ENCODE measurements at regions of chr3 and their contacts with region 1.

Region 1: GRCh38 chr3:119819806-119820205 is 37.9 kb downstream of the NR1I2 start:
- DNase-seq: no peak
- ATAC-seq: no peak
- H3K4me3 ChIP-seq: no peak overlapping the region
- H3K27ac ChIP-seq: no peak overlapping the region
- H3K4me1 ChIP-seq: peaks cover 12% of the 10 kb centered on the region
- H3K27me3 ChIP-seq: no peaks in the 10 kb centered on the region
- CTCF ChIP-seq: no peak
- EP300 ChIP-seq: no peak
- POLR2A ChIP-seq: no peak
- RAD21 ChIP-seq: no peak

Region 2: DNA sequence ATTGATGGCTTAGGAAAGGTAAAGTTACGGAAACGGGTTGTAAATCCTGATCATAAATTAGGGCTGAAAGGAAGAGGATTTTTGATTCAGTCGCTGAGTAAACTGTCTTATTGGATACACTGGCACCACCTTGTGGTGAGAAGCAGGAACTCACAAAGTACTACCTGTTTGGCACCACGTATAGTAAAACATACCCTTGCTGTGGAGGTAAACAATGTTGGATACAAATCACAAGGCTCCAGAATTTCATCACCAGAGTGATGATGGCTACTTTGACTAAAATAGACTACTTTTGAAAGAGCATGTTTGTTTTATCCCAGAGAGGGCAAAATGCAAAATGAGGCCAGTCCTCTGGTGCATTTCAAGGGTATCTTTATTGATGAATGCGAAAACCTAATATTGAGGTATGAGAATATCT is 1002.0 kb before region 1 on chr3:
- CTCF ChIA-PET with region 1: no interaction called
- POLR2A ChIA-PET with region 1: no interaction called
- in situ Hi-C with region 1: no loop called
- intact Hi-C with region 1: no loop called
- DNase-seq: peak; percentile 48
- ATAC-seq: peak; percentile 89
- H3K4me3 ChIP-seq: no peak overlapping the region
- H3K27ac ChIP-seq: no peak overlapping the region
- H3K4me1 ChIP-seq: no peaks in the 10 kb centered on the region
- H3K27me3 ChIP-seq: no peaks in the 10 kb centered on the region
- CTCF ChIP-seq: peak; percentile 78
- EP300 ChIP-seq: no peak
- POLR2A ChIP-seq: no peak
- RAD21 ChIP-seq: peak; percentile 16; the same call in 1 of the 2 replicates

Region 3: GRCh38 chr3:119716998-119717397 is 102.8 kb before region 1 on chr3:
- CTCF ChIA-PET with region 1: no interaction called
- POLR2A ChIA-PET with region 1: no interaction called
- in situ Hi-C with region 1: no loop called
- intact Hi-C with region 1: loop called (anchors 5 kb)
- DNase-seq: peak; percentile 80
- ATAC-seq: peak; percentile 98
- H3K4me3 ChIP-seq: no peak overlapping the region
- H3K27ac ChIP-seq: no peak overlapping the region
- H3K4me1 ChIP-seq: peaks cover 23% of the 10 kb centered on the region
- H3K27me3 ChIP-seq: no peaks in the 10 kb centered on the region; a peak in 1 of 5 replicates
- CTCF ChIP-seq: peak; percentile 21; the same call in 1 of the 2 replicates
- EP300 ChIP-seq: 0 out of 4 replicates have a peak, but pooled peaks of 1 of the 2 experiments have one; percentile 42
- POLR2A ChIP-seq: no peak
- RAD21 ChIP-seq: no peak

Region 4: GRCh38 chr3:119779731-119780383 is 39.9 kb before region 1 on chr3:
- CTCF ChIA-PET with region 1: interaction called, 5 read pairs
- POLR2A ChIA-PET with region 1: no interaction called
- in situ Hi-C with region 1: no loop called
- intact Hi-C with region 1: loop called (anchors 5 kb)
- DNase-seq: no peak
- ATAC-seq: no peak
- H3K4me3 ChIP-seq: no peak overlapping the region
- H3K27ac ChIP-seq: no peak overlapping the region
- H3K4me1 ChIP-seq: peaks cover 51% of the 10 kb centered on the region
- H3K27me3 ChIP-seq: no peaks in the 10 kb centered on the region
- CTCF ChIP-seq: no peak
- EP300 ChIP-seq: no peak
- POLR2A ChIP-seq: no peak
- RAD21 ChIP-seq: no peak

Region 5: GRCh38 chr3:119794971-119795612 is 24.7 kb before region 1 on chr3:
- CTCF ChIA-PET with region 1: no interaction called
- POLR2A ChIA-PET with region 1: interaction called, 5 read pairs
- in situ Hi-C with region 1: no loop called
- intact Hi-C with region 1: loop called (anchors 1 kb)
- DNase-seq: peak; percentile 98
- ATAC-seq: peak; percentile 96
- H3K4me3 ChIP-seq: peak overlapping the region; percentile 31 to 43 (median 33); a peak in 5 of 6 replicates
- H3K27ac ChIP-seq: peak overlapping the region; percentile 90
- H3K4me1 ChIP-seq: peaks cover 53% of the 10 kb centered on the region
- H3K27me3 ChIP-seq: no peaks in the 10 kb centered on the region
- CTCF ChIP-seq: 0 out of 2 replicates have a peak, but pooled peaks have one; percentile 19
- EP300 ChIP-seq: peak; percentile 63 to 94; a peak in 2 of 4 replicates
- POLR2A ChIP-seq: peak; percentile 72 to 80
- RAD21 ChIP-seq: no peak